ENCODE measurements at regions of chrX and their contacts with region 1.

Region 1: GRCh38 chrX:123779908-123780396 is 47.1 kb upstream of the THOC2 start:
- DNase-seq: no peak
- CTCF ChIP-seq: no peak

Region 2: GRCh38 chrX:123740006-123740405 is 39.9 kb before region 1 on chrX:
- CTCF ChIA-PET with region 1: no interaction called
- POLR2A ChIA-PET with region 1: no interaction called
- DNase-seq: no peak
- CTCF ChIP-seq: no peak

Region 3: DNA sequence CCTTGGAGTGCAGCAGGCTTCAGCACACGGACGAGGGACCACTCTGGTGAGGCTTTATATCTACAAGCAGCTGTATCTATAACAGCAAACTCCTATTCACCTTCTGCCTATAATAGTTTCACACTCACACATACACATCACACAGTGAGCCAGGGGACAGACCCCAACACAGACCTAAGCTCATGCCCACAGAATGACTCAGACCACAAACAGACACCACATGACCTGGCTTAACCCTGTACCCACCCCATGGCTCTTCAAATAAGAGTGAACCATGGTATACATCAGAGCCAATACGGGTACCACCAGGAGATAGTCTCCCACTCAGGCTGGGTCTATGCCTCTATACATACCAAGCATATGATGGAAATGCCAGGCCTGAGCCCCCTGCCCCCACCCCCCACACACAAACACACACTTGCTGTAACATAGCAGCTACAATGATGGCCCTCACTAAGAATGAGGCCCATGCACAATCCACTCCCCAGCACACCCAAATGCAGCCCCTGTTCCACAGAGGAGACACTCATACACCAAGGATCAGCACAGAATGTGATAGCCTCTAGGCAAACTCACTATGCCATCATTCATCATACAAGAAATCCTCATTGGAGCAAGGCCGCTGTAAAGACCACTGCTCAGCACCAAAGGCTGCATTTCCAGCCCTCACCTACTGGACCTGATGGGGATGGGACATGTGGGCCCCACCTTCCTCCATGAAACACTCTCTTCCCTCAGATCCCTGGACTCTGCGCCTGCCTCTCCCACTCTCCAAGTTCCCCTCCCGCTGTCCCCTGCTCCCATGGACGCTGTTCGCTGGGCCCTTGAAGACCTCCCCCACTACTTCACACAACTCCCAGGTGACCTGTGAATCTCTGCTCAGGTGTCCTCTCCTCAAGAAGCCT is 17.8 kb after region 1 on chrX:
- CTCF ChIA-PET with region 1: interaction called, 12 read pairs
- POLR2A ChIA-PET with region 1: no interaction called
- DNase-seq: no peak
- CTCF ChIP-seq: no peak

Region 4: GRCh38 chrX:124098089-124098488 is 318.1 kb after region 1 on chrX:
- CTCF ChIA-PET with region 1: no interaction called
- POLR2A ChIA-PET with region 1: no interaction called
- DNase-seq: peak; percentile 13
- CTCF ChIP-seq: peak; percentile 28

Measured in GM10248 (cell line).